GM12878 (cell line): ENCODE measurements at regions of chr16 and their contacts with region 1.

Region 1: GRCh38 chr16:8936421-8936820 is 27.3 kb downstream of the USP7 start:
- DNase-seq: no peak
- ATAC-seq: peak; percentile 92
- H3K4me3 ChIP-seq: no peak overlapping the region
- H3K27ac ChIP-seq: no peak overlapping the region
- H3K4me1 ChIP-seq: peaks cover 50% of the 10 kb centered on the region
- H3K27me3 ChIP-seq: no peaks in the 10 kb centered on the region
- CTCF ChIP-seq: peak; percentile 70 to 84 (median 77)
- EP300 ChIP-seq: no peak
- POLR2A ChIP-seq: no peak
- RAD21 ChIP-seq: peak; percentile 85

Region 2: DNA sequence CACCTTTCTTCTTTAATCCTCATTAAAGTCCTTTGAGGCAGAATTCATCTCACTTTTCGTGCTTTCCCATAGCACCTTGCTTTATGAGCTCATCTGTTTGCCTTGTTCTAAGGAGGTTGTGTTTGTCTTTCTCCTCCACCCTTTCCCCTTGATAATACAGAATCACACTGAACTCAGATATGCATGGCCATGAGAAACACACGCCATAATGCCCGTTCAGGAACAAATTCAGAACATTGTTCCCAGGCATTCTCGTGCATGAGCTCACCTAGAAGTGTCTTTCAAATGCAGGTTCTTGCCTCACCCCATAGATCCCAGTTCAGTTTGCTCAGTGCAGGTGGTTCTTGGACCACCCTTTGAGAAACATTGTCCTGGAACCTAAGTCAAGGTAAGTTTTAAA is 417.2 kb before region 1 on chr16:
- CTCF ChIA-PET with region 1: no interaction called
- POLR2A ChIA-PET with region 1: no interaction called
- RAD21 ChIA-PET with region 1: no interaction called
- SMC1A ChIA-PET with region 1: no interaction called
- in situ Hi-C with region 1: no loop called
- intact Hi-C with region 1: no loop called
- DNase-seq: no peak
- ATAC-seq: no peak
- H3K4me3 ChIP-seq: no peak overlapping the region
- H3K27ac ChIP-seq: no peak overlapping the region
- H3K4me1 ChIP-seq: no peaks in the 10 kb centered on the region
- H3K27me3 ChIP-seq: no peaks in the 10 kb centered on the region
- CTCF ChIP-seq: no peak
- EP300 ChIP-seq: no peak
- POLR2A ChIP-seq: no peak
- RAD21 ChIP-seq: no peak

Region 3: GRCh38 chr16:8899709-8900317 is 36.6 kb before region 1 on chr16:
- CTCF ChIA-PET with region 1: interaction called, 8 read pairs
- POLR2A ChIA-PET with region 1: interaction called, 3 read pairs
- RAD21 ChIA-PET with region 1: interaction called, 5 read pairs
- SMC1A ChIA-PET with region 1: interaction called, 19 read pairs
- in situ Hi-C with region 1: no loop called
- intact Hi-C with region 1: loop called (anchors 1 kb)
- DNase-seq: no peak
- ATAC-seq: peak; percentile 90
- H3K4me3 ChIP-seq: no peak overlapping the region
- H3K27ac ChIP-seq: peak overlapping the region; percentile 18; the same call in 1 of the 2 replicates
- H3K4me1 ChIP-seq: peaks cover 5% of the 10 kb centered on the region
- H3K27me3 ChIP-seq: no peaks in the 10 kb centered on the region
- CTCF ChIP-seq: peak in 1 of 3 experiments; percentile 31; a peak in 1 of 6 replicates
- EP300 ChIP-seq: no peak
- POLR2A ChIP-seq: no peak
- RAD21 ChIP-seq: no peak

Region 4: DNA sequence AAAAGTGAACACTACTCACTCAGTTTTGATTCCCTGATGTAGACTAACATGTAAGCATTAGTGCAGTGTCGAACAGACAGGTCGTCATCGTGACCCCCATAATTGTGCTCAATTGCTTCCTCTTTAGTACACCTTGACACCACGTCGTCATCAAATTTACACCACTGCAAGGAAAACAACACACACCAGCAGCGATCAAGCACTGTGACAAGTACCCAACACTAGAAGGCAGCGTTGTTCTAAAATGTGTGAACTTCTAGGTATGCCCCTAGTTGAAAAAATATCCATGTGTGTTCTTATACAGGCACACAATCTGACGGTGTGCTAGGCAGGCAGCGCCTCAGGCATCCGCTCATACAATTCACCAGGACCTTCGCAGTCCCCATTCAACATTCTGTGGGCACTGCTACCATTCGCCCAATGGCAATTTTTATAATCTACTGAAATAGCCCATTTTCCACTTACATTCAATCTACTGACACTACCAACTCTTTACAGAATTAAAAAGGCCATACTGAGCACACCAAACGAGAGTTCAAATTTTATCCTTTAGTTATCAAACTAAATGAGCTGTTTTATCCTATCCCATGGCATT is 31.2 kb before region 1 on chr16:
- CTCF ChIA-PET with region 1: interaction called, 9 read pairs
- POLR2A ChIA-PET with region 1: no interaction called
- RAD21 ChIA-PET with region 1: interaction called, 5 read pairs
- SMC1A ChIA-PET with region 1: interaction called, 19 read pairs
- in situ Hi-C with region 1: no loop called
- intact Hi-C with region 1: loop called (anchors 1 kb)
- DNase-seq: no peak
- ATAC-seq: peak; percentile 84
- H3K4me3 ChIP-seq: no peak overlapping the region
- H3K27ac ChIP-seq: no peak overlapping the region
- H3K4me1 ChIP-seq: no peaks in the 10 kb centered on the region
- H3K27me3 ChIP-seq: no peaks in the 10 kb centered on the region
- CTCF ChIP-seq: peak; percentile 58 to 67 (median 65); a peak in 5 of 6 replicates
- EP300 ChIP-seq: no peak
- POLR2A ChIP-seq: no peak
- RAD21 ChIP-seq: peak; percentile 72

Region 5: DNA sequence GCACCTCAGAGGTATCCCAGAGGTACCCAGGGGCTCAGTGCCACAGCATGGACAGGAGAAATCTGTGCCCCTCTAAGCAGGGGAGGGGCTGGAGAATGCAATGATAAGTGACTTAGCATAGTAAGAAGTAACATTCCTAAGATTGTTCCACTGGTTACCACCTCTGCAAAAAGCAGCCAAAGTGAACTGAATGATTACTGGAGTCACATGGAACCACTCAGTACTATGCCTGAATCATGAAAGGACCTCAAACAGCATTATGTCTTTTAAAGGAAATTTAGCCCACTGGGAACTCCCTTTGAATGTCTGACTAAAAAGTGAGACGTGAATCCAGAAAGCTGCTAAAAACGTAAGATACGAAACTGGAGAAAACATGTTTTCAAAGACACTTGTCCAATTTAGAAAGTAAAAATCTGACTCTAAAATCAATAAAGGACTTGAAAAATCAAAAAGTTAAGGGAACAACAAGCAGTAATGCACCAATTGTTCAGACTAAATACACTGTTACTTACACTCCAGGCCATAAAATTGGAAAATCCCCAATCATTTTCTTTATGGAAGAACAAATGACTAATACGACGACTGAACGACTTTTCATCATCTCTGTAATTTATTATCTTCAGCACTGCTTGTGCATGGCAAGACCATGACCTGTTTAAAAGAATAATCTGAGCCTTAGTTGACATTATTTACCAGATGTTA is 15.6 kb before region 1 on chr16:
- CTCF ChIA-PET with region 1: interaction called, 12 read pairs
- POLR2A ChIA-PET with region 1: interaction called, 3 read pairs
- RAD21 ChIA-PET with region 1: interaction called, 4 read pairs
- SMC1A ChIA-PET with region 1: interaction called, 4 read pairs
- in situ Hi-C with region 1: no loop called
- intact Hi-C with region 1: no loop called
- DNase-seq: no peak
- ATAC-seq: no peak
- H3K4me3 ChIP-seq: no peak overlapping the region
- H3K27ac ChIP-seq: peak overlapping the region; percentile 29
- H3K4me1 ChIP-seq: peaks cover 26% of the 10 kb centered on the region
- H3K27me3 ChIP-seq: no peaks in the 10 kb centered on the region
- CTCF ChIP-seq: no peak
- EP300 ChIP-seq: no peak
- POLR2A ChIP-seq: no peak
- RAD21 ChIP-seq: no peak

Region 6: DNA sequence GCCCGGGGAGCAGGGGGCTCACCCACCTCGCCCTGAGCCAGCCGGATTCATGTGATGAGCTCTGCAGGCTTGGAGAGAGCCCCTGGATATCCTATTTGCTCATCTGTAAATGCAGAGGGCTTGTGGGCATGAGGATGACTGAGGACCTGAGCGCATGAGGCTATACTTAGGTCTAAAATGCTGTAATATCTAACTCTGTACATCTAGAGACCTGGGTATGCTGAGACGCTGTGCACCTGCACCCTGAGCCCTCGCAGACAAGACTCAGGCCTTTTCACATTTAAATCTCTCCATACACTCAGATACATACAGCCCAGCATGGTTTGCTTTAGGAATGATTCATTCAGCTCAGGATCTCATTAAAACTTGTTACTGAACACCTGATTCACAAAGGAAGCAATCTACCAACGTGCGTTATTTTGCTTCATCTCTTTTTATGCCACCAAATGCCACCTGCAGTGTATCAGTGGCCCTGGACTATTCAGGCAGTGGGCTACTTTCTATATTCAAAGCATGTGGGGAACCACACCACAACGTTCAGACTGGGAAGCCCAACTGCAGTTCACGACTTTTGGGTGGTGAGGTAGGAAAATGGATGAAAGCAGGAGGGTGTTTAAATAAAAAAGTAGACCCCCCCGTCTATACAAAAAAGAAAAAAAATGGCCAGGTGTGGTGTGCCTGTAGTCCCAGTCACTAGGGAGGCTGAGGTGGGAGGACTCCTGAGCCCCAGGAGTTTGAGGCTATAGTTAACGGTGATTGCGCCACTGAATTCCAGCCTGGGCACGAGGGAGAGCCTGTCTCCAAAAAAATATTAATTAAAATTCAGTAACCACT is 15.2 kb after region 1 on chr16:
- CTCF ChIA-PET with region 1: interaction called, 44 read pairs
- POLR2A ChIA-PET with region 1: interaction called, 3 read pairs
- RAD21 ChIA-PET with region 1: interaction called, 7 read pairs
- SMC1A ChIA-PET with region 1: interaction called, 16 read pairs
- in situ Hi-C with region 1: no loop called
- intact Hi-C with region 1: no loop called
- DNase-seq: no peak
- ATAC-seq: peak; percentile 39
- H3K4me3 ChIP-seq: peak overlapping the region; percentile 26; the same call in 1 of the 2 replicates
- H3K27ac ChIP-seq: peak overlapping the region; percentile 52
- H3K4me1 ChIP-seq: peaks cover 71% of the 10 kb centered on the region
- H3K27me3 ChIP-seq: no peaks in the 10 kb centered on the region
- CTCF ChIP-seq: no peak
- EP300 ChIP-seq: no peak
- POLR2A ChIP-seq: 0 out of 2 replicates have a peak, but pooled peaks have one; percentile 29
- RAD21 ChIP-seq: no peak

Region 7: GRCh38 chr16:8958344-8959167 is 22.1 kb after region 1 on chr16:
- CTCF ChIA-PET with region 1: interaction called, 31 read pairs
- POLR2A ChIA-PET with region 1: interaction called, 6 read pairs
- RAD21 ChIA-PET with region 1: interaction called, 6 read pairs
- SMC1A ChIA-PET with region 1: interaction called, 5 read pairs
- in situ Hi-C with region 1: no loop called
- intact Hi-C with region 1: no loop called
- DNase-seq: no peak
- ATAC-seq: peak; percentile 37
- H3K4me3 ChIP-seq: peak overlapping the region; percentile 80
- H3K27ac ChIP-seq: peak overlapping the region; percentile 41
- H3K4me1 ChIP-seq: peaks cover 39% of the 10 kb centered on the region
- H3K27me3 ChIP-seq: no peaks in the 10 kb centered on the region
- CTCF ChIP-seq: no peak
- EP300 ChIP-seq: no peak
- POLR2A ChIP-seq: no peak
- RAD21 ChIP-seq: no peak

Region 8: DNA sequence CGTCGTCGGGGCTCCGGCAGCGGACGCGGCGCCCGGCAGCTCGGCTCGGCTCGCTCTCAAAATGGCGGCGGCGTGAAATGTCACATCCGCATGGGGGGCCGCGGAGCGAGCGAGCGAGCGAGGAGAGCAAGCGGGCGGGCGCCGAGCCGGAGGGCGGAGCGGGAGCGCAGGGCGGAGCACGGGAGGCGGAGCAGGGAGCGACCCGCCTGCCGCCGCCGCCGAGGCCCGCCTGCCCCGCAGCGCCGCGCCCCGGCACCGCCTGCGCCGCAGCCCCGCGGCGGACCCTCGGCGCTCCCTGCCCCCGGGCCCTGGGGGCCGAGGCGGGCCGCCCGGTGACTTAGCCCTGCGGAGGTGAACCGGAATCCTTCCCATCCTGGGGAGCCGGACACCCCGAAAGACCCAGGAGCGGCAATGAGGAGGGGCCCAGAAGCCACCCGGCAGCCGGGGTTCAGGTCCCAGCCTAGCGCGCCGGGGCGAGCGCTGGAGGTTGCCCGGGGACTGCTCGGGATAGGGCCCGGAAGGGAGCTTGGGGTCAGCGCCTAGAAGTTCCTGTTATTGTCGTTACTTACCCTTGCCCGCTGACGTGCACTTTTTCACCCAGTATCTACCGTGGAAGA is 27.5 kb after region 1 on chr16 and contains the start of gene USP7:
- CTCF ChIA-PET with region 1: interaction called, 31 read pairs
- POLR2A ChIA-PET with region 1: interaction called, 6 read pairs
- RAD21 ChIA-PET with region 1: interaction called, 6 read pairs
- SMC1A ChIA-PET with region 1: interaction called, 5 read pairs
- in situ Hi-C with region 1: no loop called
- intact Hi-C with region 1: no loop called
- DNase-seq: no peak
- ATAC-seq: peak; percentile 86
- H3K4me3 ChIP-seq: peak within 1 kb of the TSS; percentile 80
- H3K27ac ChIP-seq: peak within 1 kb of the TSS; percentile 85
- H3K4me1 ChIP-seq: peaks cover 8% of the 10 kb centered on the region
- H3K27me3 ChIP-seq: no peaks in the 10 kb centered on the region
- CTCF ChIP-seq: peak in 1 of 3 experiments; percentile 13; a peak in 1 of 6 replicates
- EP300 ChIP-seq: no peak
- POLR2A ChIP-seq: peak; percentile 89
- RAD21 ChIP-seq: no peak
- polyA plus RNA-seq, gene USP7: 20.8 to 25.0 TPM